ENCODE measurements at regions of chr19 and their contacts with region 1.

Region 1: DNA sequence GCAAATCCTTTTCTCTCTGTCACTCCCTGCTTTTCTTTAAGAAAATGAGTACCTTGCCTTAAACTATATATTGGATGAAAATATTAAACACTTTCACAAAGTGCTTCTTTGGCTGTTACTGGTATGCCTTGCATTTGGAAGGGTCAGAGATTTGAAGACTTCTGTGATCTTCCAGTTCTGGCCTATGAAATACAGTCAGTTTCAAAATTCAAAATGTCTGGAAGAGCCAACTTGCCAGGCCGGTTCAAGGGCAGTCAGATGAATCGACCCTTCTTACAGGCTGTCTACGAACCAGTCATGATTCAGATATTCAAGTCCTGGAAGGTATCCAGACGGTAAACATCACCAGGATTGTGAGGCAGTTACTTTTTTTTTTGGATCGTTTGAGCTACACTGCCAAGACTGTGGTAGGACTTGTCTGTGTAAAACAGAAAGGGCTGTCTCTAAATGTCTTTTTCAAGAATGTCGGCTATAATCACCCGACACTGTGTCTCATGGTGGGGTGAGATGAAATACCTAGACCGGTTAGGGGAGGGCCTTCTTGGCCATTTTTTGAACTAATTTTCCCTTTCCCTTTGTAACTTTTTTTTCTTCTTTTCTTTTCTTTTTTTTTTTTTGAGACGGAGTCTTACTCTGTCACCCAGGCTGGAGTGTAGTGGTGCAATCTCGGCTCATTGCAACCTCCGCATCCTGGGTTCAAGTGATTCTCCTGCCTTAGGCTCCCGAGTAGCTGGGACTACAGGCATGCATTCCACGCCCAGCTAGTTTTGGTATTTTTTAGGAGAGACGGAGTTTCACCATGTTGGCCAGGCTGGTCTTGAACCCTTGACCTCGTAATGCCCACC is 11.2 kb downstream of the ACTN4 start:
- DNase-seq: peak; percentile 100
- ATAC-seq: peak; percentile 59
- H3K4me3 ChIP-seq: peak overlapping the region; percentile 2 to 31; a peak in 3 of 4 replicates
- H3K27ac ChIP-seq: peak overlapping the region; percentile 96
- H3K4me1 ChIP-seq: peaks cover 100% of the 10 kb centered on the region
- H3K27me3 ChIP-seq: no peaks in the 10 kb centered on the region
- CTCF ChIP-seq: no peak

Region 2: GRCh38 chr19:38683393-38684080 is 24.9 kb after region 1 on chr19:
- CTCF ChIA-PET with region 1: interaction called, 6 read pairs
- POLR2A ChIA-PET with region 1: interaction called, 12 read pairs
- in situ Hi-C with region 1: no loop called
- intact Hi-C with region 1: no loop called
- DNase-seq: peak; percentile 100
- ATAC-seq: peak; percentile 87
- H3K4me3 ChIP-seq: peak overlapping the region in 1 of 2 experiments; percentile 10; a peak in 2 of 4 replicates
- H3K27ac ChIP-seq: peak overlapping the region; percentile 98
- H3K4me1 ChIP-seq: peaks cover 100% of the 10 kb centered on the region
- H3K27me3 ChIP-seq: no peaks in the 10 kb centered on the region
- CTCF ChIP-seq: no peak

Region 3: DNA sequence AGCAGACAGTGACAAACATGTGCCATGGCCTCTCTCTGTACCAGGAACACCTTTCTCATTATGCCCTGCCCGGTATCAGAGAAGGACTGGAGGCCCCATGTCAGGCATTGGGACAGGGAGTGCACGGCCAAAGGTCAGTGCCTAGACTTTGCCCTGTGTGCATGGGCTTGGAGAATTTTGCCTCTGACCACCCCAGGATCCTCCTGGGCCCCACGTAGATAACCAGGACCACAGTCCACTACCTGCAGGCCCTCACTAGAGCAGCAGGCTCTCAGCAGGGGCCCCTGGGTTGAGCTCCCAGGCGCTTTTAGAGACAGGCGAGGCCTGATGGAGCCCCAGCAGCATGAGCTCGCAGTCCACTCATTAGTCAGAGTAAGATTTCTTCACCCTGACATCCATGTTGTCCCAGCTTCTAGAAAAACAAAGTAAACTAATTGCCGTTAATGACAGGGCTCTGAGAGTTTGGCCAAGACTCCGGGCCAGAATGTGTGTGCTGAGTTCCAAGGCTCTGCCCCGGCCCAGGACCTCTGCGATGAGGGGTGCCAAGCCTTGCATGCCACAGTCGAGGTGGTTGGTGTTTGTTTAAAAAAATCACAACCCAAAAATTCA is 42.9 kb after region 1 on chr19:
- CTCF ChIA-PET with region 1: no interaction called
- POLR2A ChIA-PET with region 1: interaction called, 12 read pairs
- in situ Hi-C with region 1: no loop called
- intact Hi-C with region 1: no loop called
- DNase-seq: no peak
- ATAC-seq: peak; percentile 4; the same call in 1 of the 2 replicates
- H3K4me3 ChIP-seq: no peak overlapping the region
- H3K27ac ChIP-seq: peak overlapping the region; percentile 98
- H3K4me1 ChIP-seq: peaks cover 88% of the 10 kb centered on the region
- H3K27me3 ChIP-seq: no peaks in the 10 kb centered on the region
- CTCF ChIP-seq: no peak